A549 (cell line): ENCODE measurements at regions of chr3 and their contacts with region 1.

Region 1: GRCh38 chr3:184229394-184230080 is at the start of gene VWA5B2:
- DNase-seq: peak; percentile 57 to 80
- ATAC-seq: peak; percentile 80 to 94
- H3K4me3 ChIP-seq: peak within 1 kb of the TSS; percentile 59
- H3K27ac ChIP-seq: peak within 1 kb of the TSS; percentile 46 to 76; a peak in 4 of 6 replicates
- H3K4me1 ChIP-seq: peaks cover 6% of the 10 kb centered on the region; the same call in 2 of the 3 replicates
- CTCF ChIP-seq: no peak
- EP300 ChIP-seq: no peak
- POLR2A ChIP-seq: no peak
- RAD21 ChIP-seq: no peak
- polyA plus RNA-seq, gene VWA5B2: 0.11 and 0.37 TPM in 2 replicates

Region 2: GRCh38 chr3:184176377-184177330 is 52.9 kb before region 1 on chr3:
- CTCF ChIA-PET with region 1: interaction called, 14 read pairs
- POLR2A ChIA-PET with region 1: no interaction called
- DNase-seq: peak; percentile 64 to 77
- ATAC-seq: peak; percentile 78 to 82
- H3K4me3 ChIP-seq: peak overlapping the region; percentile 91
- H3K27ac ChIP-seq: peak overlapping the region; percentile 95 to 99
- H3K4me1 ChIP-seq: peaks cover 15% of the 10 kb centered on the region
- CTCF ChIP-seq: no peak
- EP300 ChIP-seq: no peak
- POLR2A ChIP-seq: no peak
- RAD21 ChIP-seq: no peak

Region 3: GRCh38 chr3:184209146-184209923 is 20.2 kb before region 1 on chr3:
- CTCF ChIA-PET with region 1: interaction called, 10 read pairs
- POLR2A ChIA-PET with region 1: no interaction called
- DNase-seq: no peak
- ATAC-seq: no peak
- H3K4me3 ChIP-seq: no peak overlapping the region
- H3K27ac ChIP-seq: no peak overlapping the region
- H3K4me1 ChIP-seq: no peaks in the 10 kb centered on the region
- CTCF ChIP-seq: no peak
- EP300 ChIP-seq: no peak
- POLR2A ChIP-seq: no peak
- RAD21 ChIP-seq: no peak

Region 4: DNA sequence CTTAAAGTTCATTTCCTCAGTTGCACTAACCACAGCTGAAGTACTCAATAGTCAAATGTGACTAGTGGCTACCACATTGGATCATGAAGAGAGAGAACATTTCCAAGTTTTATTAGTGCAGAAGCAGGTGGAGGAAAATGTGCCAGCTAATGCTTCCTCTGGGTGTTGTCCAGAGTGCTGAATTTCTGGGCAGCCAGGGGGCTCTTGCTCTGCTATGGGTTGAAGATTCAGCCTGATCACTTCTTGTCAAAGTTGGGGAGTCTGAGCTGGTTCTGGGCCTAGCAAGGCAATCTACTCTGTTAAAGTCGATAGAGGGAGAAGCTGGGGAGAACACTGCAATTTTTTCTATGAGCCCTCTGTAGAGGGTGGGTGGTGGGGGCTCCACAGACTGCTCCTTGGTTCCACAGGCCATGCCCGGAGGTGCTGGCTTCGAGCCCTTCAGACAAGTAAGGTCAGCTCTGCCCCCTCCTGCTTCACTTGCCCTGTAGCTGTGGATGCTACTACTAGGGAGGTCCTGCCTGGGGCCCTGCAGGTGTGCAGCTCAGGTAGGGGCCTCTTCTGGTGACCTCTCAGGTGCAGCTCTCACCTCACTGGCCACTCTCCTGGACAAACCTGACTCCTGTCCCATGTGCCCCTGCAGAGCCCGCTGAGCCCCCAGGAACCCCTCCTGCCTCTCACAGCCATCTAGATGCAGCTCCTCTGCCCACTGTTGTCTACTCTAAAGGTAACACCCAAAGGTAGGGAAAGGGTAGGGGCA is 11.0 kb after region 1 on chr3:
- CTCF ChIA-PET with region 1: interaction called, 44 read pairs
- POLR2A ChIA-PET with region 1: no interaction called
- DNase-seq: no peak
- ATAC-seq: peak; percentile 33 to 53; a peak in 4 of 6 replicates
- H3K4me3 ChIP-seq: no peak overlapping the region
- H3K27ac ChIP-seq: no peak overlapping the region
- H3K4me1 ChIP-seq: no peaks in the 10 kb centered on the region
- CTCF ChIP-seq: no peak
- EP300 ChIP-seq: no peak
- POLR2A ChIP-seq: no peak
- RAD21 ChIP-seq: no peak

Region 5: GRCh38 chr3:184289426-184289938 is 59.9 kb after region 1 on chr3:
- CTCF ChIA-PET with region 1: interaction called, 24 read pairs
- POLR2A ChIA-PET with region 1: no interaction called
- DNase-seq: peak; percentile 66 to 74
- ATAC-seq: peak; percentile 78 to 88; a peak in 5 of 6 replicates
- H3K4me3 ChIP-seq: no peak overlapping the region
- H3K27ac ChIP-seq: no peak overlapping the region
- H3K4me1 ChIP-seq: no peaks in the 10 kb centered on the region
- CTCF ChIP-seq: peak; percentile 71
- EP300 ChIP-seq: no peak
- POLR2A ChIP-seq: no peak
- RAD21 ChIP-seq: peak; percentile 79 to 88